Activated CD4-positive, alpha-beta memory T cell treated with anti-CD3 and anti-CD28 coated beads for 36 hours (primary cell): ENCODE measurements at regions of chr1 and their contacts with region 1.

Region 1: GRCh38 chr1:15100121-15100874 is 53.2 kb upstream of the TMEM51 start:
- DNase-seq: peak; percentile 66
- H3K4me3 Mint-ChIP-seq: no peak overlapping the region
- H3K27ac Mint-ChIP-seq: no peak overlapping the region
- H3K4me1 Mint-ChIP-seq: peaks cover 5% of the 10 kb centered on the region
- H3K27me3 Mint-ChIP-seq: peaks cover 27% of the 10 kb centered on the region

Region 2: GRCh38 chr1:14661222-14661621 is 439.1 kb before region 1 on chr1:
- CTCF ChIA-PET with region 1: no interaction called
- POLR2A ChIA-PET with region 1: no interaction called
- intact Hi-C with region 1: no loop called
- DNase-seq: no peak
- H3K4me3 Mint-ChIP-seq: no peak overlapping the region
- H3K27ac Mint-ChIP-seq: no peak overlapping the region
- H3K4me1 Mint-ChIP-seq: no peaks in the 10 kb centered on the region
- H3K27me3 Mint-ChIP-seq: peaks cover 6% of the 10 kb centered on the region

Region 3: GRCh38 chr1:15062479-15063099 is 37.7 kb before region 1 on chr1:
- CTCF ChIA-PET with region 1: interaction called, 7 read pairs
- POLR2A ChIA-PET with region 1: no interaction called
- intact Hi-C with region 1: loop called (anchors 2 kb)
- DNase-seq: no peak
- H3K4me3 Mint-ChIP-seq: no peak overlapping the region
- H3K27ac Mint-ChIP-seq: no peak overlapping the region
- H3K4me1 Mint-ChIP-seq: no peaks in the 10 kb centered on the region
- H3K27me3 Mint-ChIP-seq: no peaks in the 10 kb centered on the region

Region 4: GRCh38 chr1:15364740-15365139 is 264.4 kb after region 1 on chr1:
- CTCF ChIA-PET with region 1: no interaction called
- POLR2A ChIA-PET with region 1: no interaction called
- intact Hi-C with region 1: no loop called
- DNase-seq: no peak
- H3K4me3 Mint-ChIP-seq: no peak overlapping the region
- H3K27ac Mint-ChIP-seq: no peak overlapping the region
- H3K4me1 Mint-ChIP-seq: no peaks in the 10 kb centered on the region
- H3K27me3 Mint-ChIP-seq: no peaks in the 10 kb centered on the region